Heart left ventricle (tissue), 16 donors: ENCODE measurements at regions of chr12 and their contacts with region 1.

Region 1: GRCh38 chr12:39872425-39872824 is 233.5 kb downstream of the SLC2A13 start:
- DNase-seq: no peak
- ATAC-seq: no peak
- H3K4me3 ChIP-seq: no peak overlapping the region
- H3K27ac ChIP-seq: no peak overlapping the region
- H3K4me1 ChIP-seq: peaks cover 0 to 13% (median 0%) of the 10 kb centered on the region in 12 donors
- H3K27me3 ChIP-seq: no peaks in the 10 kb centered on the region
- CTCF ChIP-seq: no peak
- POLR2A ChIP-seq: no peak

Region 2: DNA sequence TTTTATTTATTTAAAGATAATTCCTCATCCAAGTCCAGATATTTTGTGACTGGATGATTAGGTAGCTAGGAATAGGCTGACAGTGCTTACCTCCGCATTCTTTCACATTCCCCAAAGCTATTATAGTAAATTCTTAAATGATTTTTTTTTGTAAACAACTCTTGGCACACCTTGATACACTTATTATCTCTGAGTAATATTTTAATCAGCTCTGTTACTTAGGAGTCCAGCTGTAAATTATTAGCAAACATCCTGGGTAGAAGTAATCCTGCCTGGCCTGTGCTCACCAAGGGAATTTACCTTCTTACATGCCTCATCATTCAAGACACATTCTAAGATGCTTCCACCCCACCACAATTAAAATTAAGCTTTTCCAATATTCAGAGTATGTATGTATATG is 47.4 kb after region 1 on chr12:
- intact Hi-C with region 1: loop called in 1 of 10 experiments (anchors 10 kb)
- DNase-seq: no peak
- ATAC-seq: no peak
- H3K4me3 ChIP-seq: no peak overlapping the region
- H3K27ac ChIP-seq: no peak overlapping the region
- H3K4me1 ChIP-seq: peaks cover 0 to 4% (median 0%) of the 10 kb centered on the region in 12 donors
- H3K27me3 ChIP-seq: no peaks in the 10 kb centered on the region
- CTCF ChIP-seq: no peak
- POLR2A ChIP-seq: no peak